ENCODE measurements at regions of chr19 and their contacts with region 1.

Region 1: GRCh38 chr19:12789904-12790619 is 1.2 kb upstream of the JUNB start:
- DNase-seq: peak; percentile 97 to 99 (median 98)
- H3K4me3 ChIP-seq: peak overlapping the region; percentile 80
- H3K27ac ChIP-seq: peak overlapping the region; percentile 95 to 99
- H3K4me1 ChIP-seq: peaks cover 8% of the 10 kb centered on the region
- H3K27me3 ChIP-seq: no peaks in the 10 kb centered on the region
- CTCF ChIP-seq: no peak
- EP300 ChIP-seq: peak; percentile 58
- POLR2A ChIP-seq: peak; percentile 95

Region 2: DNA sequence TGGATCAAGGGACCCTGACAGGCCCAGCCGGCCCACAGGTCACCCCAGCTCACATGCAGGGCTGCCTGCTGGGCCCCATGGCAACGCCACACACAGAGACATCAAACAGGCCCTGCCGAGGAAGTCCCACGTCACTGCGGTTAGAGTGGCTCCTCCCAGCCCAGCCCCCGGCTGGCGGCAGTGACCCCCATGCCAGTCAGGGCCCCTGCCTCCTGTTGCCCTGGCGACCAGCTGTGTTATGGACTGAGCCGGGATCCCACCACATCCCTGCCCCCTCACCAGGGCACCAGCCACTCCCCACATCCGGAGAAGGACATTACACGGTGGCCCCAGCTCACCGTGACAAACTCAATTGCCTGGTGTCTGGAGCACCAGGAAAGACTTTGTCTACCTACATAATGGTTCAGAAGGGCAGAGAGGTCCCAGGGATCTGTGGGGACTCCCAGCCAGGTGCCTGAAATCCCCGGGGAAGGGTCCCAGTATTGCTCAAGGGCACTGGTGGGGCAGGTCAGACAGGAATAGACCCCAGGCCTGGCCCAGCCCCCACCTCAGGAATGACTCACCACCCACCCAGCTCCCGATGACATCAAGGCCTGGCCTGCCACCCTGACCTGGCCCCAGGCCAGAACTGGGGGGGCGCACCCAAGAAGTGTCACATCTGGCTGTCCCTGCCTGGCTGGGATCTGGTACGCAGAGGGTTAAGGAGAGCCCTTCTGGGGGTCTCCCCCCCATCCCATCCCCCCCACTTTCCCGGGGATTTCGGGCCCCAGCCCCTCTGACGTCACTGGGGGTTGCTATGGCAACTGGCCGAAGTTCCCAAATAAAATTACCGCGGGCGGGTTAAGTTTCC is 1056.7 kb after region 1 on chr19:
- intact Hi-C with region 1: loop called in 1 of 4 experiments (anchors 10 kb)
- DNase-seq: peak; percentile 94 to 97 (median 96)
- H3K4me3 ChIP-seq: peak overlapping the region; percentile 62
- H3K27ac ChIP-seq: peak overlapping the region; percentile 98 to 99
- H3K4me1 ChIP-seq: peaks cover 14% of the 10 kb centered on the region
- H3K27me3 ChIP-seq: no peaks in the 10 kb centered on the region
- CTCF ChIP-seq: no peak
- EP300 ChIP-seq: peak; percentile 23
- POLR2A ChIP-seq: no peak